Activated CD4-positive, alpha-beta memory T cell treated with anti-CD3 and anti-CD28 coated beads for 36 hours (primary cell): ENCODE measurements at regions of chr4 and their contacts with region 1.

Region 1: GRCh38 chr4:1870578-1871443 is at the start of gene NSD2:
- DNase-seq: peak; percentile 93
- H3K4me3 Mint-ChIP-seq: peak within 1 kb of the TSS; percentile 89
- H3K27ac Mint-ChIP-seq: peak within 1 kb of the TSS; percentile 95
- H3K4me1 Mint-ChIP-seq: peaks cover 33% of the 10 kb centered on the region
- H3K27me3 Mint-ChIP-seq: no peaks in the 10 kb centered on the region
- total RNA-seq, gene NSD2: 197 to 199 TPM

Region 2: GRCh38 chr4:1249148-1249730 is 621.6 kb before region 1 on chr4:
- CTCF ChIA-PET with region 1: no interaction called
- POLR2A ChIA-PET with region 1: no interaction called
- intact Hi-C with region 1: loop called (anchors 2 kb)
- DNase-seq: peak; percentile 85
- H3K4me3 Mint-ChIP-seq: peak overlapping the region; percentile 85
- H3K27ac Mint-ChIP-seq: peak overlapping the region; percentile 96
- H3K4me1 Mint-ChIP-seq: peaks cover 69% of the 10 kb centered on the region
- H3K27me3 Mint-ChIP-seq: no peaks in the 10 kb centered on the region

Region 3: GRCh38 chr4:1579901-1580691 is 290.7 kb before region 1 on chr4:
- CTCF ChIA-PET with region 1: no interaction called
- POLR2A ChIA-PET with region 1: no interaction called
- intact Hi-C with region 1: loop called (anchors 10 kb)
- DNase-seq: peak; percentile 94
- H3K4me3 Mint-ChIP-seq: peak overlapping the region; percentile 73
- H3K27ac Mint-ChIP-seq: peak overlapping the region; percentile 65
- H3K4me1 Mint-ChIP-seq: peaks cover 4% of the 10 kb centered on the region
- H3K27me3 Mint-ChIP-seq: no peaks in the 10 kb centered on the region

Region 4: GRCh38 chr4:1712216-1713002 is 158.4 kb before region 1 on chr4 and contains the start of gene SLBP:
- CTCF ChIA-PET with region 1: no interaction called
- POLR2A ChIA-PET with region 1: interaction called, 3 read pairs
- intact Hi-C with region 1: loop called (anchors 1 kb)
- DNase-seq: peak; percentile 99
- H3K4me3 Mint-ChIP-seq: peak within 1 kb of the TSS; percentile 99
- H3K27ac Mint-ChIP-seq: peak within 1 kb of the TSS; percentile 94
- H3K4me1 Mint-ChIP-seq: peaks cover 61% of the 10 kb centered on the region
- H3K27me3 Mint-ChIP-seq: no peaks in the 10 kb centered on the region
- total RNA-seq, gene SLBP: 103 to 106 TPM

Region 5: DNA sequence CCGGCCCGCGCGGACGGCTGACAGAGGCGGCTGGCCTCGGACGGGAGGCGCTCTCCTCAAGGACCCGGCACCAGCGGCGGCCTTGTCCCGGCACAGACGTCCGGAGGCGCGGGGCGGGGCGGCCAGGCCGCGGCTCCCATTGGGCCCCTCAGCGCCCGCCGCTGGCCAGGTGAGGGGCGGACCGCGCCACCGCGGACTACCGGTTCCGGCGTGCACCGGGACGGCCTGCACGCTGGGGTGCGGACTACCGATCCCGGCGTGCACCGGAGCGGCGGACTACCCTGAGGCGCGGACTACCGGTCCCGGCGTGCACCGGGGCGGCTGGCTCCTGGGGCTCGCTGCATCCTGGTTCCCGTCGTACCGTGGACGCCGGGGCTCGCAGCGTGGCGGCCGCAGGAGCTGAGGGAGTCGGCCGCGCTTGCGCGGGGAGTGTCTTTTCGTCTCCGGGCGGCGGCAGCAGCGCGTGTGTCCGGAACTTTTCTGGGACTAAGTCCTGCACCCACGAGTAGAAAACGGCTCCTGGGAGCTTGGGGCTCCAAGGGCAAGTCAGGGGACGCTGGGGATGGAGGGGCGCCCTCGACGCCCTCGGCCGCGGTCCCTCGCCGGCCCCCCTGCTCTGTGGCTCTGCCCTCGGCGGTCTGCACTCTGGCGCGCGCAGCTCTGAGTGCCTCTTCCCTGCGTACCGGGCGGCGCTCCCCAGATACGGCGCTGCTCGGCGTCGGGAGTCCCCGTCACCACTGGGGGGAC is 14.6 kb before region 1 on chr4 and contains the start of gene LETM1:
- CTCF ChIA-PET with region 1: interaction called, 8 read pairs
- POLR2A ChIA-PET with region 1: interaction called, 31 read pairs
- intact Hi-C with region 1: loop called (anchors 1 kb)
- DNase-seq: peak; percentile 96
- H3K4me3 Mint-ChIP-seq: peak within 1 kb of the TSS; percentile 79
- H3K27ac Mint-ChIP-seq: peak within 1 kb of the TSS; percentile 49
- H3K4me1 Mint-ChIP-seq: peaks cover 32% of the 10 kb centered on the region
- H3K27me3 Mint-ChIP-seq: no peaks in the 10 kb centered on the region
- total RNA-seq, gene LETM1: 41.1 to 42.6 TPM

Region 6: GRCh38 chr4:1939664-1940509 is 69.1 kb after region 1 on chr4:
- CTCF ChIA-PET with region 1: no interaction called
- POLR2A ChIA-PET with region 1: no interaction called
- intact Hi-C with region 1: no loop called
- DNase-seq: no peak
- H3K4me3 Mint-ChIP-seq: no peak overlapping the region
- H3K27ac Mint-ChIP-seq: no peak overlapping the region
- H3K4me1 Mint-ChIP-seq: no peaks in the 10 kb centered on the region
- H3K27me3 Mint-ChIP-seq: no peaks in the 10 kb centered on the region

Region 7: GRCh38 chr4:2008875-2009703 is 138.3 kb after region 1 on chr4 and contains the start of gene NELFA:
- CTCF ChIA-PET with region 1: no interaction called
- POLR2A ChIA-PET with region 1: no interaction called
- intact Hi-C with region 1: loop called (anchors 5 kb)
- DNase-seq: peak; percentile 96
- H3K4me3 Mint-ChIP-seq: peak within 1 kb of the TSS; percentile 88
- H3K27ac Mint-ChIP-seq: peak within 1 kb of the TSS; percentile 87
- H3K4me1 Mint-ChIP-seq: peaks cover 29% of the 10 kb centered on the region
- H3K27me3 Mint-ChIP-seq: no peaks in the 10 kb centered on the region
- total RNA-seq, gene NELFA: 39.5 to 41.5 TPM

Region 8: DNA sequence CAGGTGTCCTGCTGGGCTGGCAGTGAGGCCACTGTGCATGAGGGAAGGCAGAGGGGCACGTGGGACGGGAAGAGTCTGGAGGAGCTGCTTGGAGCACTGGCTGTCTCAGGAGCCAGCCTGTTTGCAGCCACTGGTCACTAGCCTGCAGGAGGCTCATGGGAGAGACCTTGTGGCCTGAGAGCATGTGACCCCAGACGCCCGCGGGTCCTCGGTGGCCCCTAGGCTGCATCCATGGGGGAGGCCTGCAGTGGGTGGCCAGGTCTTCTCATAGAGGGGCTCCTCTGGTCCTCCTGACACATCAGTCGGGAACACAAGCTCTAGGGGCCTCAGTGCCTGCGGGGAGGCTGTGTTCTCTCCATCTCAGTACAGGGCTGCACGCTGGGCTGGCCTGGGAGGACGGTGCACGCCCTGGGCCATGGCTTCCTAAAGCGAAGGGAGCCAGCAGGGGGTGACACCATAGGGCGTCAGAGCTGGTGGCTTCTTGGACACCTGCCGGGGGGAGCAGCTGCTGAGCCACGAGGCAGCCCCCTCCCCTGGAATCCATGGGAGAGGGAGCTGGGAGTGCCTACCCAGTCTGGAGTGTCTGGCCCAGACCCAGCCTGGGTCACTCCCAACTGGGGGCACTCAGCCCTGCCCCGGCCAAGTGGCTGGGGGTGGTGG is 200.6 kb after region 1 on chr4:
- CTCF ChIA-PET with region 1: no interaction called
- POLR2A ChIA-PET with region 1: no interaction called
- intact Hi-C with region 1: no loop called
- DNase-seq: no peak
- H3K4me3 Mint-ChIP-seq: no peak overlapping the region
- H3K27ac Mint-ChIP-seq: no peak overlapping the region
- H3K4me1 Mint-ChIP-seq: no peaks in the 10 kb centered on the region
- H3K27me3 Mint-ChIP-seq: no peaks in the 10 kb centered on the region